IMR-90 (cell line): ENCODE measurements at regions of chr3 and their contacts with region 1.

Region 1: GRCh38 chr3:168647582-168647981 is 551.9 kb upstream of the GOLIM4 start:
- DNase-seq: peak; percentile 21
- ATAC-seq: peak; percentile 88
- H3K4me3 ChIP-seq: no peak overlapping the region
- H3K27ac ChIP-seq: no peak overlapping the region
- H3K4me1 ChIP-seq: peaks cover 2% of the 10 kb centered on the region; the same call in 1 of the 2 replicates
- H3K27me3 ChIP-seq: no peaks in the 10 kb centered on the region
- CTCF ChIP-seq: no peak
- POLR2A ChIP-seq: no peak
- RAD21 ChIP-seq: no peak

Region 2: GRCh38 chr3:168693870-168694269 is 46.3 kb after region 1 on chr3:
- CTCF ChIA-PET with region 1: no interaction called
- POLR2A ChIA-PET with region 1: no interaction called
- dilution Hi-C with region 1: no loop called
- in situ Hi-C with region 1: no loop called
- intact Hi-C with region 1: loop called (anchors 5 kb)
- DNase-seq: no peak
- ATAC-seq: no peak
- H3K4me3 ChIP-seq: no peak overlapping the region
- H3K27ac ChIP-seq: no peak overlapping the region
- H3K4me1 ChIP-seq: no peaks in the 10 kb centered on the region
- H3K27me3 ChIP-seq: no peaks in the 10 kb centered on the region
- CTCF ChIP-seq: no peak
- POLR2A ChIP-seq: no peak
- RAD21 ChIP-seq: no peak